CD8-positive, alpha-beta memory T cell (primary cell): ENCODE measurements at regions of chr5 and their contacts with region 1.

Region 1: GRCh38 chr5:151659001-151659754 is 27.5 kb downstream of the SPARC start:
- DNase-seq: peak; percentile 63 to 79 (median 69)
- H3K4me3 ChIP-seq: no peak overlapping the region
- H3K4me3 Mint-ChIP-seq: no peak overlapping the region
- H3K27ac ChIP-seq: no peak overlapping the region
- H3K27ac Mint-ChIP-seq: no peak overlapping the region
- H3K4me1 ChIP-seq: peaks cover 12% of the 10 kb centered on the region
- H3K4me1 Mint-ChIP-seq: peaks cover 1 to 11% (median 10%) of the 10 kb centered on the region in 3 donors
- H3K27me3 ChIP-seq: no peaks in the 10 kb centered on the region
- H3K27me3 Mint-ChIP-seq: peaks cover 16 to 32% of the 10 kb centered on the region in 2 donors

Region 2: DNA sequence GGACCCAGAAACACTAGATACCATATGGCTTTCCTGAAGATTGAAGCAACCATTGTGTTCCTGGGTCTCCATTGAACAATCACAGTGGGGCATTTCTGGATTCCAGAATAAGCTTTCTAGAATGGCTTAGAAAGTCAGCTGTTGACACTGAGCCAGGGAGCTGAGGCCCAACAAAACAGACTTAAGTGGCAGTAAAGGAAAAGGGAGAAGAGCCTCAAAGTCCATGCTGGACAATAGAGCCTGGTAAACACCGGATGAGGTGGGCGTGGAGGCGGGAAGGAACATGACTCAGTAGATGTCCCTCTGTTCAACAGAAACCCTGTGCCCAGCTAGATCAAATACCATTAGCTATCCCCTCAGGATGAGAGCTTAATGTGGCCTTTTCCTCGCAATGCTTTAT is 12.8 kb after region 1 on chr5:
- CTCF ChIA-PET with region 1: interaction called, 12 read pairs
- POLR2A ChIA-PET with region 1: no interaction called
- DNase-seq: no peak
- H3K4me3 ChIP-seq: no peak overlapping the region
- H3K4me3 Mint-ChIP-seq: no peak overlapping the region
- H3K27ac ChIP-seq: no peak overlapping the region
- H3K27ac Mint-ChIP-seq: peak overlapping the region in 1 of 8 donors; percentile 74
- H3K4me1 ChIP-seq: no peaks in the 10 kb centered on the region
- H3K4me1 Mint-ChIP-seq: no peaks in the 10 kb centered on the region
- H3K27me3 ChIP-seq: no peaks in the 10 kb centered on the region
- H3K27me3 Mint-ChIP-seq: peaks cover 4 to 23% of the 10 kb centered on the region in 2 donors

Region 3: DNA sequence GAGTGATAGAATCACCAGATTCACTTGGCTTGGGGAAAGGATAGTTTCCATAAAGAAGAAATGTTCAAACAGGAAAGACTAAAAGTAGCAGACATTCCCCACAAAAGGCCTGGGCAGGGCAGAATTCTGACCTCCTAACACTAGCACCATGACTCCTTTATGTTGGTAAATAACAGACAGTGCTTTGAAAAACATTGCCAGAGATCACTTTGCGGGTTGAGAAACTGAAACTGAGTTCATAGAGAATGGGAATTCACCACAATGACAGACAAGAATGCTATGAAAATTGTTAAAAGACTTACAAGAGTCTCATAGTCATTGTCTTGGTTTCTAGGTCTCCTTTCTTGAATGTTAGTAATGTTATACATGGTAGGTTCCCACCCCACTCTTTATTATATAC is 437.9 kb after region 1 on chr5:
- CTCF ChIA-PET with region 1: no interaction called
- POLR2A ChIA-PET with region 1: no interaction called
- DNase-seq: no peak
- H3K4me3 ChIP-seq: no peak overlapping the region
- H3K4me3 Mint-ChIP-seq: peak overlapping the region in 1 of 7 donors; percentile 28
- H3K27ac ChIP-seq: no peak overlapping the region
- H3K27ac Mint-ChIP-seq: peak overlapping the region in 2 of 8 donors; percentile 2 to 37
- H3K4me1 ChIP-seq: no peaks in the 10 kb centered on the region
- H3K4me1 Mint-ChIP-seq: peaks cover 5 to 10% (median 8%) of the 10 kb centered on the region in 3 donors
- H3K27me3 ChIP-seq: no peaks in the 10 kb centered on the region
- H3K27me3 Mint-ChIP-seq: peaks cover 0 to 7% of the 10 kb centered on the region in 2 donors

Region 4: DNA sequence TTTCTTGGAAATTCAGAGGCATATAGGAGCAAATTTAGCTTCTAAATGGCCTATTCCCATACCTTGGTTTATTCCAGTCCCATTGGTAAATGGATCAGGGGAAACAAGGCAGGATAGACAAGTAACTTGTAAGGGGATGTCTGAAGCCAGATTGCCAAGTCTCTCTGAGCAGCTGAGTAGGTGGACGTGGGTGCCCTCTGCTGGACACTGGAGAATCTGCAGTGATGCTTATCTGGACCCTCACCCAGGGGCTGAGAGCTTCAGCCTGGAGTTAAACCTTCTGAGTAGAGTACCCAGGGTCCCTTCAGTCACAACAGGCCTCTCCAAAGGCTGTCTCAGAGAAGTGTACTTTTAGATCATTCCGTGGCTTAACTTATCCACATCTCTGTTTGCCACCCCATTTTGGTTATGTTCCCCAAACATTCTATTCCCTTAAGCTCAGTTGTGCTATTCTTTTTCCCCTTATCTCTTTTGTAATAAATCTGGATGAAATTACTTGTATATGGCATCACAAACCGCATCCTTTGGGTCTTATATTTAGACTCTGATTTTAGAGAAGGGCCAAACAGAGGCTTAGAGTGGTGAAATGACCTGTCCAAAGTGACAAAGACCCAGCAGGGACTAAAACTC is 483.8 kb after region 1 on chr5:
- CTCF ChIA-PET with region 1: interaction called, 13 read pairs
- POLR2A ChIA-PET with region 1: no interaction called
- DNase-seq: peak; percentile 30 to 65 (median 43)
- H3K4me3 ChIP-seq: no peak overlapping the region
- H3K4me3 Mint-ChIP-seq: no peak overlapping the region
- H3K27ac ChIP-seq: no peak overlapping the region
- H3K27ac Mint-ChIP-seq: peak overlapping the region in 1 of 8 donors; percentile 39
- H3K4me1 ChIP-seq: no peaks in the 10 kb centered on the region
- H3K4me1 Mint-ChIP-seq: no peaks in the 10 kb centered on the region
- H3K27me3 ChIP-seq: no peaks in the 10 kb centered on the region
- H3K27me3 Mint-ChIP-seq: peaks cover 0 to 4% of the 10 kb centered on the region in 2 donors